Right lobe of liver (tissue), 6 donors: ENCODE measurements at regions of chr11 and their contacts with region 1.

Region 1: DNA sequence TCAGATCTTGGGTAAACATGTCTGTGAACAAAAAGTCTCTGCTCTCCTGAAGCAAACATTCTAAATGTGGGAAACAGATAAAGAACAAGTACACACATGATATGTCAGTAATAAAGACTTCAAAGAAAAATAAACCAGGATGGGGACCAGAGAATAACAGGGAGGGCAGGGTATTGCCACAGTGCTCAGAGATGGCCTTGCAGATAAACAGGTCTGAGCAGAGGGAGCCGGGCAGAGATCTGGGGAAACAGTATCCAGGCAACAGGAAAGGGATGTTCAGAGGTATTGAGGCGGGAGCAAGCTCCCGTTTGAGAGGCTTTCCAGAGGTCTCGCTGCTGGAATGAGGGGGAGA is 2.9 kb downstream of the CCDC86 start:
- DNase-seq: no peak
- ATAC-seq: no peak
- H3K4me3 ChIP-seq: no peak overlapping the region
- H3K27ac ChIP-seq: no peak overlapping the region
- H3K4me1 ChIP-seq: peaks cover 0 to 18% (median 7%) of the 10 kb centered on the region in 4 donors
- H3K27me3 ChIP-seq: no peaks in the 10 kb centered on the region
- CTCF ChIP-seq: no peak
- POLR2A ChIP-seq: no peak

Region 2: DNA sequence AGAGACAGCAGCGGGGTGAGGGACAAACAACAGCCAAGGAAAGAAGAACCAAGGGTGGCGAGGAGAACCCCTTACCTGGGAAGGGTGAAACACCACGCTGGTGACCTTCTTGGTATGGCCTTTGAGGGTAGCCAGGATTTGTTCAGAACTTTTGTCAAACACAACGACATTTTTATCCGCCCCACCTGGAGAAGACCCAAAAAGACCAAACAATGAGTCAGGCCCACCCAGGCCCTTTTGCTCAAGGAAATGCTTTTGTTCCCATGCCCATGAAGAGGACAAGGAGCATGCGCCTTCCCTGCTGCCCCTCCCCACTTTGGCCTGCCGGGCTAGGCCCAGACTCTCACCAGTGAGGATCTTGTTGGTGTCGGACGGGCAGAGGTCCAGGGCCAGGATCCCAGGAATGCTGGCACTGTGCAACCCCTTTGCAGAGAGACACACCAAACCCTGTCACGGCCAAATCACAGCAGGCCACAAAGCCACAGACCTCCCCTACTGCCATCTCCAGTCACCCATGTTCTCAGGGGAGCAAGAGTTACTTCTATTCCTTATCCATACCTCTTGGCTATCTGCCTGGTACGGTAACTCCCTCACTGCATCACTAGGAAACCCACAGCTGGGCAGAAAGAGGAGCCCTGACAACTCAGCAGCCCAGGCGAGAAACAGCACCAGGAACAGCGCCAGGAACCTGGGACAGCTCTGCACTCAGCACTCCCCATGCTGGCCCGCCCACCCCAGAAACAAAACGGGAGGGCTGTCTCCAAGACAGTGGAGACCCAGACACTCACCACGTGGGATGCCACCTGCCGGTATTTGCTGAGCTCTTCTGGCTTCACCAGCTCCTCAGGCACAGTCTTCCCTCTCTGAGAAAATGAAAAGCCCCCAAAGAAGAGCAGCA is 55.9 kb after region 1 on chr11:
- intact Hi-C with region 1: loop called in 1 of 2 experiments (anchors 5 kb)
- DNase-seq: no peak
- ATAC-seq: peak in 1 of 4 donors; percentile 8
- H3K4me3 ChIP-seq: no peak overlapping the region
- H3K27ac ChIP-seq: no peak overlapping the region
- H3K4me1 ChIP-seq: peaks cover 0 to 18% (median 8%) of the 10 kb centered on the region in 4 donors
- H3K27me3 ChIP-seq: no peaks in the 10 kb centered on the region
- CTCF ChIP-seq: no peak
- POLR2A ChIP-seq: no peak